Left colon (tissue), 2 donors: ENCODE measurements at regions of chr3 and their contacts with region 1.

Region 1: GRCh38 chr3:173045770-173046382 is 95.2 kb downstream of the SPATA16 start:
- DNase-seq: no peak
- ATAC-seq: no peak

Region 2: DNA sequence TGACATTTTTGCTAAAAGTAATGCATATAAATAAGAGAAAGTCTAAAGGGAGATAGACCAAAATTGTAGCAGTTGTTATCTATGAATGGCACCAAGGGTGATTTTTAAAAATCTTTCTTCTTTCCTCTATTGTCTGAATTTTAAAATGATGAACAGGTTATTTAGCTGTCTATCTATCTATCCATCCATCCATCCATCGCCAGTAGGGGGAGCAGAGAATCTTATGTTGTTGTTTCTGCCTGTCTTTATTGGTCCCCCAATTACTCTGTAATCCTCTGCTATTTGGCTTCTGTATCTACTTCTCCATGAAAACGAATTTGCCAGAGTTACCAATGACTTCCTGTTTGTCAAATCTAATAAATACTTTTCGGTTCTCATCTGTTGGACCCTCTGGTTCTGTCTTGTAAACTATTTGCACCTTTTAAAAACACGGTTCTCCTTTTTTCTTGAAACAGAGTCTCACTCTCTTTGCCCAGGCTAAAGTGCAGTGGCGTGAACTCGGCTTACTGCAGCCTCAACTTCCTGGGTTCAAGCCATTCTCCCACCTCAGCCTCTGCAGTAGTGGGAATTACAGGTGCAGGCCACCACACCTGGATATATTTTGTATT is 209.4 kb before region 1 on chr3:
- intact Hi-C with region 1: loop called in 1 of 2 experiments (anchors 10 kb)
- DNase-seq: peak in 1 of 2 donors; percentile 44
- ATAC-seq: peak; percentile 39

Region 3: GRCh38 chr3:172856766-172857742 is 188.8 kb before region 1 on chr3:
- intact Hi-C with region 1: no loop called
- DNase-seq: no peak
- ATAC-seq: peak; percentile 42